ENCODE measurements at regions of chr12 and their contacts with region 1.

Region 1: DNA sequence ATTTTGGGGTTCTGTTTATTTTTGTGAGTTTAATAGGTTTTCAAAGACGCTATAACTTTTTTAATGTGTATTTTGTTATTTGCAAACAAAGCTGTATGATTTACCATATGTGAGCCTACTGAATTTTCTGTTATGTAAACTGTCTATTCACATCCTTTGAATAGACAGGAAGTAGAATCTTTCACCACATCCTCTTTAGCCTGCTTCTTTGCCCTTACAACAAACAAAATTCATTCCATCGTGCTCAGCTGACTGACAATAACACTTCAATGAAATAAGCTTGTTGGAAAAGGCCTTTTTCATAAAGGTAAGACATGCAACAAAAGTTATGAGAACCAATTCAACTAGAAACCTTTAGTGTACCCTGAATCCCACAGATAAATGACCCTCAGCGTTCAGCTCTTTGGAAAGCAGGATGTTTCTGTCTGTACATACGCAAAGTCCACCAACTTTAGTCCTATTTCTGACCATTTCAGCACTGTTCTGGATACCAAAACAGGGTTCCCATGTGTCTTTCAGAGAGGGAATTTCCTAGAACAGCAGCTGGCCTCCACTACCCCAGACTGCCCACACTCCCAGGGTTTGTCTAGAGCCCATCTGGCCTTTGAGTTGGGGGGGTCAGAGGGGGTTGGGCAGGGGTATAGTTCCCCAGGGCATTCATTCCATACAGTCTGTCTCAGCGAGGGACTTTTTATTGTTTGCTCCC is 71.3 kb downstream of the DUSP6 start:
- DNase-seq: no peak
- H3K4me3 Mint-ChIP-seq: peak overlapping the region; percentile 36
- H3K27ac Mint-ChIP-seq: peak overlapping the region; percentile 71
- H3K4me1 Mint-ChIP-seq: peaks cover 30% of the 10 kb centered on the region
- H3K27me3 Mint-ChIP-seq: no peaks in the 10 kb centered on the region

Region 2: DNA sequence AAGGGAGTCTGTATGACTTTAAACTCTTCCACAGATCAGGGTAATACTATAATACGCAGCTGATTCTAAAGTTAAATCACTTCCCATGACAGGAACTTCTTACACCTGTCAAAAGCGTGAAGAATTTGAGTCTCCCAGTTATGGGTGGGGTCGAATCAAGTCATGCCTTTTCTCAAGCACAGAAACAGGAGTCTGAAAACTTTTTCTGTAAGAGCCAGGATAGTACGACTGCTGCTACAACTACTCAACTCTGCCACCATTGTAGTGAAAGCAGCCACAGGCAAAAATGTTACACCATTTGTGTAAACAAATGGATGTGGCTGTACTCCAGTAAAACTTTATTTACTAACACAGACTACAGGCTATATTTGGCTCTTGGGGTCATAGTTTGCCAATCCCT is 19.0 kb before region 1 on chr12:
- CTCF ChIA-PET with region 1: no interaction called
- intact Hi-C with region 1: loop called (anchors 2 kb)
- DNase-seq: no peak
- H3K4me3 Mint-ChIP-seq: no peak overlapping the region
- H3K27ac Mint-ChIP-seq: no peak overlapping the region
- H3K4me1 Mint-ChIP-seq: peaks cover 24% of the 10 kb centered on the region
- H3K27me3 Mint-ChIP-seq: no peaks in the 10 kb centered on the region

Region 3: DNA sequence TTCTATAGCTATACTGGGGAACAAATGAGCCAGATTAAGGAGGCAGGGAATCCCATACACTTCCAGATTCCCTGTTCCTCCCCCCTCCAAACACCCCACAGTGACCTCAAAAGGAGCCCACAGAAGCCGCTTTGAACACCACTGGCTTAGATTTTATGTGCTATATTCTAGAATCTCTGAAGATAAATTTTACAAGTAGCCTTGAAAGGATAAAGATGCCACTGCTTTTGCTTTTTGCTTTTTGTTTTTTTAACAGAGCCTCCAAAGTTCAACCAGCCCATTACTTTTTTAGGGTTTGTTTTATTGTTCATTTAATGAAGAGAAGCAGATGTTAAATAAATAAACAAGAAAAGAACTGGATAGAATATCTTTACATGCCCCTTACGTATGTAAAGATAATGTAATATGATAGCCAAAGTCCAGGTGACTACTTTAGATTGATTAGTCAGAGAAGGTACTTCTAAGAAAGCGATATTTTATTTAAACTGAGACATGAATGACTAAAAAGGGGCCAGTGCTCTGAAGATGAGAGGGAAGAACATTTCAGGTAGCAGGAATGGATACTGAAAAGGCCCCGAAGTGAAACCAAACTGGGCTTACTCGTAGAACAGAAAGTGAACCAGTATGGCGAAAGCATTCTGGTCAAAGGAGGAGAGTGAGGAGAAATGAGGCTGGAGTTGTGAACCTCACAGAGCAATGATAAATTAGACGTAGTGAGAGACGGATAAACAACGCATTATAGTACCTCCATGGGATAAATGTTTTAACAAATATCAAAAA is 26.7 kb after region 1 on chr12:
- CTCF ChIA-PET with region 1: no interaction called
- intact Hi-C with region 1: loop called (anchors 2 kb)
- DNase-seq: peak; percentile 28
- H3K4me3 Mint-ChIP-seq: no peak overlapping the region
- H3K27ac Mint-ChIP-seq: no peak overlapping the region
- H3K4me1 Mint-ChIP-seq: peaks cover 30% of the 10 kb centered on the region
- H3K27me3 Mint-ChIP-seq: no peaks in the 10 kb centered on the region

Measured in activated naive CD4-positive, alpha-beta T cell treated with anti-CD3 and anti-CD28 coated beads for 36 hours (primary cell).